ENCODE measurements at regions of chr5 and their contacts with region 1.

Region 1: GRCh38 chr5:150000256-150000989 is at the starts of genes HMGXB3 and TIGD6:
- DNase-seq: peak; percentile 92
- ATAC-seq: peak; percentile 83
- H3K4me3 Mint-ChIP-seq: peak within 1 kb of the TSS; percentile 94
- H3K27ac Mint-ChIP-seq: peak within 1 kb of the TSS; percentile 96
- H3K4me1 Mint-ChIP-seq: peaks cover 39% of the 10 kb centered on the region
- H3K27me3 Mint-ChIP-seq: no peaks in the 10 kb centered on the region
- total RNA-seq, gene HMGXB3: 36.5 to 37.5 TPM
- total RNA-seq, gene TIGD6: 1.1 to 1.4 TPM

Region 2: DNA sequence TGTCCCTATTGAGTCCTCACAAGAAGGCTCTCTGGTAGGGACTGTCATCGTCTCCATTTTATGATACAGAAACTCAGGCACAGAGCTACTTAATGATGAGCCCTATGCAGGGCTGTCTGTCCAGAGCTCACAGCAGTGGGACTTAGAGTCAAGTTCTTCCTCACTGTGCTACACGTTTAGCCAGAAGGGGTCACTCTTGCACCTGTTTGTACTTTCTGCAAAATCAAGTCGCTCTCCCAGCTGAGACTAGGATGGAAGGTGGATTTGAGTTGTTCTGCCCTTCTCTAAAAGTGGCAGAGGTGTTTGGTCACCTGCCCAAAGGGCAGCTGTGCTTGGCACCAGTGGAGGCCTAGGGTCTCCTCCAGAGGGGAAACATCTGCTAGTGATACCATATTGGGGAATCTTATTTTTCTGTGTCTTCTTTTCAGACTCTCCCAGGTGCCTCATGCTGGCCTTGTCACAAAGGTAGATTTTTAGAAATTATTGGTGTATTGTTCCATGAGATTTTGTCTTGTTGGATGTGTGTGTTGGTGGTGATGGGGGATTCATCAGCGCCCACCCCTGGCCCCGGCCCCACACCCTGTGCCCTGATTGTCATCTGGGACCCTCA is 166.1 kb before region 1 on chr5:
- CTCF ChIA-PET with region 1: interaction called, 16 read pairs
- POLR2A ChIA-PET with region 1: no interaction called
- DNase-seq: peak; percentile 73
- ATAC-seq: peak; percentile 48
- H3K4me3 Mint-ChIP-seq: no peak overlapping the region
- H3K27ac Mint-ChIP-seq: no peak overlapping the region
- H3K4me1 Mint-ChIP-seq: peaks cover 5% of the 10 kb centered on the region
- H3K27me3 Mint-ChIP-seq: no peaks in the 10 kb centered on the region

Region 3: GRCh38 chr5:149860801-149861322 is 139.6 kb before region 1 on chr5:
- CTCF ChIA-PET with region 1: no interaction called
- POLR2A ChIA-PET with region 1: no interaction called
- DNase-seq: peak; percentile 40
- ATAC-seq: peak; percentile 67
- H3K4me3 Mint-ChIP-seq: no peak overlapping the region
- H3K27ac Mint-ChIP-seq: peak overlapping the region; percentile 50
- H3K4me1 Mint-ChIP-seq: peaks cover 11% of the 10 kb centered on the region
- H3K27me3 Mint-ChIP-seq: no peaks in the 10 kb centered on the region

Region 4: DNA sequence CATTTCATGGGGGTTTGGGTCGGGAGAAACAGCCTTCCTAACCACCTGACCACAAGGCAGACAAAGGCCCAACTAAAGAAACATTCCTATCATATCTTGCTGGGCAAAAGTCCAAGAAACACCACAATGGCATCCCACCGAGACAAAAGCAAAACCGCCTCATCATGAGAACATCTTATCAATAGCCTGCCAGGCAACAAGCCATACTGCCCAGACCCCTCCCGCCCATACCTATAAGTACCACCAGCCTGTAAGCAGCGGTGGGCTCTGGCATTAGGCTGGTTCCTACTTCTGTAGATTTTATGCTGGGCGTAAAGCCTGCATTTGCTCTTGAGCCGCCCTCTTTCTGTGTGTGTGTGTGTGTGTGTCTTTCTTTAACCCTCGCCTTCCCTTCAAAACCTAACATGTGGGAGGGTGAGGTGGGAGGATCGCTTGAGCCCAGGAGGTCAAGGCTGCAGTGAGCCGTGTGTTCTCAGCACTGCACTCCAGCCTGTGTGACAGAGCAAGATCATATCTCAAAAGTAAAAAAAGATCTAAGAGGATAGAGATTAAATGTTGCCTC is 112.7 kb before region 1 on chr5:
- CTCF ChIA-PET with region 1: no interaction called
- POLR2A ChIA-PET with region 1: no interaction called
- DNase-seq: no peak
- ATAC-seq: no peak
- H3K4me3 Mint-ChIP-seq: no peak overlapping the region
- H3K27ac Mint-ChIP-seq: no peak overlapping the region
- H3K4me1 Mint-ChIP-seq: no peaks in the 10 kb centered on the region
- H3K27me3 Mint-ChIP-seq: peaks cover 4% of the 10 kb centered on the region

Region 5: GRCh38 chr5:150022163-150022540 is 21.7 kb after region 1 on chr5:
- CTCF ChIA-PET with region 1: interaction called, 4 read pairs
- POLR2A ChIA-PET with region 1: interaction called, 10 read pairs
- DNase-seq: no peak
- ATAC-seq: no peak
- H3K4me3 Mint-ChIP-seq: no peak overlapping the region
- H3K27ac Mint-ChIP-seq: peak overlapping the region; percentile 20
- H3K4me1 Mint-ChIP-seq: peaks cover 25% of the 10 kb centered on the region
- H3K27me3 Mint-ChIP-seq: no peaks in the 10 kb centered on the region